ENCODE measurements at regions of chr14 and their contacts with region 1.

Region 1: GRCh38 chr14:95495538-95496025 is 20.9 kb downstream of the SYNE3 start:
- DNase-seq: no peak
- H3K4me3 Mint-ChIP-seq: peak overlapping the region; percentile 13
- H3K27ac Mint-ChIP-seq: peak overlapping the region; percentile 81
- H3K4me1 Mint-ChIP-seq: peaks cover 57% of the 10 kb centered on the region
- H3K27me3 Mint-ChIP-seq: no peaks in the 10 kb centered on the region

Region 2: DNA sequence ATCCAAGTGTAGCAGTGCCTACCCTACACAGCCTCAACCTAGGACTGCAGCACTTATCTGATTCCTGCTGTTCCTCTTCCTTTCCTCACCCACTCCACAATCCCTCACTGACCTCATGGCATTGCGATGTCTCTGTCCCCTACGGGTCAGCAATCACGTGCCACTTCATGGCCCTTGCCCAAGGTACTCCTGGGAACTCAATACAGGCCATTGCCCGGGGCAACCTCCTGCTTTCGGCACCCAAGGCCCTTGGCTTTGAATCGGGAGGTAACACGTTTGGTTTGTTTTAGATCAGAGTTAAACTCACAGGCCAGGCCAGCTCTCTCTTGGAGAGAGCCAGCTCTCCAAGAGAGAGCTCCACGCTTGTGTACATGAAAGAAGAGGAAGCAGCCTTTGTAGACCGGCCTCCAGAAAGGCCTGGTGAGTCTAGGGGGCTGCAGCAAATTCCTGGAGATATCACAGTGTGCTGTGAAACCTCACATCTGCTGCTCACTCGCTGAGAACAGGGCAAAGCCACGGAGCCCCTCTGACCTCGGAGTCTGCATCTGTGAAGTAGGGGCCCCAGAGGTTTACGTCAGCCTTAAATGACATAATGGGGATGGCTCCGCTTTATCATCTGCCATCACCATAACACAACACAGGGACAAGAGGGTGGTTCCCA is 188.1 kb before region 1 on chr14:
- intact Hi-C with region 1: no loop called
- DNase-seq: no peak
- H3K4me3 Mint-ChIP-seq: no peak overlapping the region
- H3K27ac Mint-ChIP-seq: no peak overlapping the region
- H3K4me1 Mint-ChIP-seq: peaks cover 3% of the 10 kb centered on the region
- H3K27me3 Mint-ChIP-seq: peaks cover 17% of the 10 kb centered on the region

Region 3: DNA sequence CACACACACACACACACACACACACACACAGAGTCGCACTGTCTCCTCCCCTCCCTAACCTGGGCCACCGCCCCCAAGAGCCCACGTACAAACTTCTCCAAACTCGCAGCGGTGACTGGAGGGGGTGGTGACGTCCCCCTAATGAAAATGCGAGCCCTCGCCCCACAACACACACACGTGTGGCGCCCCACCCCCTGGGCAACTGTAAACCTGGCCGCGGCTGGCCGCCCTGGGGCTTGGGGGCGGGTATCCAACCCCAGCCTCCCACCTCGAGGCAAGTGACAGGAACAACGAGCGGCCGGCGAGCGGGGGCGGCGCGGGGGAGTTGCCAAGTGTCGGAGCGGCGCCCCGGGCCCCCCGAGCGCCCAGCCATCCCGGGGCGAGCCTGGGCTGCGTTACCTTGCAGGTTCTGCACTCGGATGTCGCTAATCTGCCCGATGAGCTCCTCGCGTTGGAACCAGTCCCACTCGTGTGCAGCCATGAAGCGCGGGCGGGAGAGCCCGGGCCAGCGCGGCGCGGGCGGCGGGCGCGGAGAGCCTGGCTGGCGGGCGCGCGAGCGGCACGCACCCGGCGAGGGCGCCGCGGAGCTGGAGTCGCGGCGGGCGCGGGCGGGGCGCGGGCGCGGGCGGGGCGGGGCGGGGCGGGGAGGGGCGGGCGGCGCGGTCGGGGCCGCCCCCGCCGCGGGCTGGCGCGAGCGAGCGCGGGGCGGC is 176.1 kb before region 1 on chr14 and contains the start of gene CLMN:
- intact Hi-C with region 1: no loop called
- DNase-seq: peak; percentile 21
- H3K4me3 Mint-ChIP-seq: peak within 1 kb of the TSS; percentile 51
- H3K27ac Mint-ChIP-seq: no peak within 1 kb of the TSS
- H3K4me1 Mint-ChIP-seq: peaks cover 14% of the 10 kb centered on the region
- H3K27me3 Mint-ChIP-seq: peaks cover 48% of the 10 kb centered on the region
- total RNA-seq, gene CLMN: 0.51 and 1.3 TPM in 2 replicates

Region 4: GRCh38 chr14:95460647-95461478 is 34.7 kb before region 1 on chr14:
- intact Hi-C with region 1: loop called (anchors 5 kb)
- DNase-seq: no peak
- H3K4me3 Mint-ChIP-seq: no peak overlapping the region
- H3K27ac Mint-ChIP-seq: no peak overlapping the region
- H3K4me1 Mint-ChIP-seq: peaks cover 28% of the 10 kb centered on the region
- H3K27me3 Mint-ChIP-seq: no peaks in the 10 kb centered on the region

Region 5: DNA sequence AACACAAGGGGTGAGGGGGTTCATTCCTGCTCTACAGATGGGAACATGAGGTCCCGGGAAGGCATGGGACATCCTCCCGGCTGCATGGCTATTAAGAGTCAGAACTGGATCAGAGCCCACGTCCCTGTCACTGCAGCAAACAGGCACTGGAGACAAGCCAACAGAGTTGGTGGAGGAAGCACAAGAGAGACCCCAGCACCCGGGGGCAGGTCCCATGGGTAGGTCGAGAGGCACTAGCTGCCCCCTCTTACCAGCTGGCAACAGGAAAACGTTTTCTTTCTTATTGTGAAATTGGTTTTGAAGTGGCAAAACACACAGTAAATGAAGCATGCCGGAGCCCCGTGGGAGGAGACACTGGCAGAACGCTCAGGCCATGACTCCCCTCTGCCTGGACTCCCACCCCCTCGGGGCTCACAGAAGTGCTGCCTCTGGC is 22.7 kb before region 1 on chr14:
- intact Hi-C with region 1: no loop called
- DNase-seq: no peak
- H3K4me3 Mint-ChIP-seq: no peak overlapping the region
- H3K27ac Mint-ChIP-seq: no peak overlapping the region
- H3K4me1 Mint-ChIP-seq: peaks cover 9% of the 10 kb centered on the region
- H3K27me3 Mint-ChIP-seq: no peaks in the 10 kb centered on the region

Region 6: DNA sequence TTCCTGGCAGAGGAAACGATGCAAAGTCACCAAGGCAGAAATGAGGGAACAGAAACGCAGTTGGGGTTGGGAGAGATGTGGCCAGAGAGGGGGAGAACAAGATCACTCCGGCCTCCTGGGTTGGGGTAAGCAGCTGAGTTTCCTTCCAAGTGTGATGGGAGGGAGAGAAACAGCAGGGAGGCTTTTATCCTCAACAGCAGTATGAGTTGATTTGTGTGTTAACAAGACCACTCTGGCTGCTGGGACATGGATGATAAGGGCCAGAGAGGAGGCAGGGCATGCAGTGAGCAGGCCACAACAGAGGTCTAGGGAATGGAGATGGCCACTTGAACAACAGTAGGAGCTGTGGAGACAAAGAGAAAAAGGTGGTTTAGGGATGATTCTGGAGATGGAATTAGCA is 106.1 kb after region 1 on chr14:
- intact Hi-C with region 1: no loop called
- DNase-seq: no peak
- H3K4me3 Mint-ChIP-seq: no peak overlapping the region
- H3K27ac Mint-ChIP-seq: no peak overlapping the region
- H3K4me1 Mint-ChIP-seq: no peaks in the 10 kb centered on the region
- H3K27me3 Mint-ChIP-seq: peaks cover 21% of the 10 kb centered on the region